CD4-positive, alpha-beta memory T cell (primary cell): ENCODE measurements at regions of chr3 and their contacts with region 1.

Region 1: GRCh38 chr3:156151824-156152428 is 31.5 kb downstream of the KCNAB1 start:
- DNase-seq: peak; percentile 40 to 56 (median 45)
- H3K4me3 ChIP-seq: no peak overlapping the region
- H3K4me3 Mint-ChIP-seq: no peak overlapping the region
- H3K27ac ChIP-seq: no peak overlapping the region
- H3K27ac Mint-ChIP-seq: peak overlapping the region in 2 of 7 donors; percentile 31 to 63
- H3K4me1 ChIP-seq: no peaks in the 10 kb centered on the region
- H3K4me1 Mint-ChIP-seq: peaks cover 0 to 1% (median under 1%) of the 10 kb centered on the region in 4 donors
- H3K27me3 ChIP-seq: no peaks in the 10 kb centered on the region
- H3K27me3 Mint-ChIP-seq: peaks cover 0 to 1% of the 10 kb centered on the region in 2 donors

Region 2: GRCh38 chr3:155870133-155870944 is 281.6 kb before region 1 on chr3 and contains the start of gene GMPS:
- CTCF ChIA-PET with region 1: no interaction called
- POLR2A ChIA-PET with region 1: no interaction called
- intact Hi-C with region 1: no loop called
- DNase-seq: peak; percentile 93 to 98 (median 96)
- H3K4me3 ChIP-seq: peak within 1 kb of the TSS; percentile 74 to 96
- H3K4me3 Mint-ChIP-seq: peak within 1 kb of the TSS; percentile 93 to 100 (median 97)
- H3K27ac ChIP-seq: peak within 1 kb of the TSS; percentile 83
- H3K27ac Mint-ChIP-seq: peak within 1 kb of the TSS; percentile 95 to 99 (median 98)
- H3K4me1 ChIP-seq: peaks cover 36% of the 10 kb centered on the region
- H3K4me1 Mint-ChIP-seq: peaks cover 11 to 44% (median 25%) of the 10 kb centered on the region in 4 donors
- H3K27me3 ChIP-seq: no peaks in the 10 kb centered on the region
- H3K27me3 Mint-ChIP-seq: no peaks in the 10 kb centered on the region
- total RNA-seq, gene GMPS: 50.5 to 53.2 TPM

Region 3: DNA sequence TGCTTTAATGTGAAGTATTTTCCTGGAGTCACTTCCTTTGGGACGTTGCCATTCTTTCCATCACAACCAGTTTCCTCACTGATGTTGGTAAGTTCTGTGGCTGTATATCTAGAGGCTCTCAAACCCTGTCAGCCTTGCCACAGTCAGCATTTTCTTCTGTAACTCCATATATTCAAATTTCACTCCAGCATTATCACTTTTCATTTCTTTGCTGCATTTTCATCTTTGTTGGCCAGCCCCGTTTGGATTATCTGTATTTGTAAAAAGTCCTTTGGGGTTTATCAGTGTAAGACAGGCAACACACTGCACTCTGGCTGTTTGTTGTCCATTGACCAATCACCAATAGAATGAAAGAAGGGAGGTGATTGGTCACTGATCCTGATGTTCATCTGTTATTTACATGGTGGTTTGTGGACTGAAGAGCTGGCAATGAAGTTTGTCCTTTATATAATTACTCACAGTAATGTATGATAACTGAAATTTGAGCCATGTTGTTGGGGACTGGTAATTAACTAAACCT is 261.2 kb before region 1 on chr3:
- CTCF ChIA-PET with region 1: no interaction called
- POLR2A ChIA-PET with region 1: no interaction called
- intact Hi-C with region 1: no loop called
- DNase-seq: no peak
- H3K4me3 ChIP-seq: no peak overlapping the region
- H3K4me3 Mint-ChIP-seq: no peak overlapping the region
- H3K27ac ChIP-seq: no peak overlapping the region
- H3K27ac Mint-ChIP-seq: no peak overlapping the region
- H3K4me1 ChIP-seq: peaks cover 21% of the 10 kb centered on the region
- H3K4me1 Mint-ChIP-seq: peaks cover 27 to 41% (median 35%) of the 10 kb centered on the region in 4 donors
- H3K27me3 ChIP-seq: no peaks in the 10 kb centered on the region
- H3K27me3 Mint-ChIP-seq: no peaks in the 10 kb centered on the region

Region 4: GRCh38 chr3:156382458-156383346 is 230.8 kb after region 1 on chr3:
- CTCF ChIA-PET with region 1: interaction called, 22 read pairs
- POLR2A ChIA-PET with region 1: no interaction called
- intact Hi-C with region 1: no loop called
- DNase-seq: no peak
- H3K4me3 ChIP-seq: no peak overlapping the region
- H3K4me3 Mint-ChIP-seq: no peak overlapping the region
- H3K27ac ChIP-seq: no peak overlapping the region
- H3K27ac Mint-ChIP-seq: no peak overlapping the region
- H3K4me1 ChIP-seq: no peaks in the 10 kb centered on the region
- H3K4me1 Mint-ChIP-seq: no peaks in the 10 kb centered on the region
- H3K27me3 ChIP-seq: no peaks in the 10 kb centered on the region
- H3K27me3 Mint-ChIP-seq: peaks cover 6 to 7% of the 10 kb centered on the region in 2 donors

Region 5: DNA sequence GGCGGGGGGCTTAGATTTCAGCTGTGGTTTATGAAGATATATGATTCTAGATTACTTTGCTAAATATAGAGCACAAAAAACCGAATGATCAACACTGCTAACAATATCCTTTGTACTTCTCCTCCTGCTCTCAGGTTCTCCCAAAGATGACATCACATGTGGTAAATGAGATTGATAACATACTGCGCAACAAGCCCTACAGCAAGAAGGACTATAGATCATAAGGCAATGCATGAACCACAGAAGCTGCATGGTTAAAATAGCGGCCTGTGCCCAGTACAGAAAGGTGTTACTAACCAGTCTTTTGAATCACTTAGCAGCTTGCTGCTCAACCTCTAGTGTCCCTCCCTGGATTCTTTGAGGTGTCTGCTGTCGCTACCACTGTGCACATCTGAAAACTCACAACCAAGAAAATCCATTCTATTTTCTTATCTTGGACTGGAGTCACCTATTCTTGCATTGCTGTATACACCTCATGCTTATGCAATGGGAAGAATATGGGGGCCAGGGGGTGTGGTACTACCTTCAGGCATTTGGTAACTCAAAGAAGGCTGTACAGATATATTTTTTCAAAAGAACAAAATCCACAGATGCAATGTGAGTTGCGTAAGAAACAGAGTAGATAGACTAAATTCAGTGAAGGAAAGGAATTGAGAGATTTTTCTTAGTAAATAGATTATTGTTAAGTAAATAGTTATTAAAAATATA is 384.8 kb after region 1 on chr3:
- CTCF ChIA-PET with region 1: interaction called, 78 read pairs
- POLR2A ChIA-PET with region 1: no interaction called
- intact Hi-C with region 1: loop called (anchors 1 kb)
- DNase-seq: no peak
- H3K4me3 ChIP-seq: no peak overlapping the region
- H3K4me3 Mint-ChIP-seq: no peak overlapping the region
- H3K27ac ChIP-seq: no peak overlapping the region
- H3K27ac Mint-ChIP-seq: no peak overlapping the region
- H3K4me1 ChIP-seq: no peaks in the 10 kb centered on the region
- H3K4me1 Mint-ChIP-seq: peaks cover 0 to 2% (median 0%) of the 10 kb centered on the region in 4 donors
- H3K27me3 ChIP-seq: no peaks in the 10 kb centered on the region
- H3K27me3 Mint-ChIP-seq: no peaks in the 10 kb centered on the region

Region 6: DNA sequence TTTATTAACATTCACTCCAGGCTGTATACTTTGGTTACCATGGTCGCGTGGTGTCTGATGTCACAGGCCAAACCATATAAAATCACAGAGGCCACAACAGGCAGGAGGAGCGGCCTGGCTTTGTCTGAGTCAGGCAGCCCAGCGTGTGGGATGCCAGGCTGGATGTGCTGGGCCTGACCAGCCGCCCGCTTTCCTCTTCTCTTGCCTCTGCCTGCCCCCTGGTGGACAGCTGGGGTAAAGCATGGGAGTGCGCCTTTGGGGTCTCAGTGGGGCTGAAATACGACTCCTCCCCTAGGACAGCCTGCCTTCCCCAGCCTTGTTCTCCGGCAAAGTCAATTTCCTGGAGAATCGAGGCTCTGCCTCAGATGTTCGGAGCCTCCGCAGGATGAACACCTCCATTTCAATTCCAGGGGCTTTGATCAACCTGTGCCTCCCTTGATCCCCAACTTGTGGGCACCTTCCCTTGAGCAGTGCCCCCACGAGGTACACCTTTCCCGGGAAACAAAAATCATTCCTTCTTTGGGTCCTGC is 929.8 kb after region 1 on chr3:
- CTCF ChIA-PET with region 1: interaction called, 36 read pairs
- POLR2A ChIA-PET with region 1: no interaction called
- intact Hi-C with region 1: loop called (anchors 1 kb)
- DNase-seq: peak; percentile 82 to 92 (median 83)
- H3K4me3 ChIP-seq: no peak overlapping the region
- H3K4me3 Mint-ChIP-seq: peak overlapping the region in 5 of 8 donors; percentile 11 to 39 (median 21)
- H3K27ac ChIP-seq: peak overlapping the region; percentile 55
- H3K27ac Mint-ChIP-seq: peak overlapping the region; percentile 85 to 96 (median 89)
- H3K4me1 ChIP-seq: peaks cover 20% of the 10 kb centered on the region
- H3K4me1 Mint-ChIP-seq: peaks cover 10 to 29% (median 17%) of the 10 kb centered on the region in 4 donors
- H3K27me3 ChIP-seq: no peaks in the 10 kb centered on the region
- H3K27me3 Mint-ChIP-seq: no peaks in the 10 kb centered on the region

Region 7: DNA sequence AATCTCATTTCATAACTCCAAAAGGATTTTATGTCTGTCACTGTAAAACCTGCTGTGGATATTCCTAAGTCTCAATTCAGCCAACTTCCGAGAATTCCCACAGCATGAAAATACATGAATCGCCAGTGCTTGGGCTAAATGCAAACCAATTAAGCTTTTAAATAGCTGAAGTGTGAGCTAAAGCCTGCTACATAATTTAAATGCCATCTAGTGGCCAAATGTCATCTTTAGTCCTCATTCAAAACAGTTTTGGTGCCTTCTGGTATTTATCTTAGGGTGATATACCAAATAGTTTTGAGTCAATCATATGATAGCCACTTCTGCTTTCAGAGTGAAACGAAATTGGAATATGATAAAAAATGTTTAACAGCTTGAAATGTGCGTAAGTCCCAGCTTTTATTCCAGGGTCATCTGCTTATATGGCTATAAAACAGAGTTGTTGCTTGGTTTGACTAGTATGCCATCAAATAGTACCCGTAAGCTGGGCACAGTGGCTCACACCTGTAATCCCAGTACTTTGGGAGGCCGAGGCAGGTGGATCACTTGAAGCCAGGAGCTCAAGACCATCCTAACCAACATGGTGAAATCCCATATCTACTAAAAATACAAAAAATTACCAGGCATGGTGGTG is 1049.8 kb after region 1 on chr3:
- CTCF ChIA-PET with region 1: interaction called, 21 read pairs
- POLR2A ChIA-PET with region 1: no interaction called
- intact Hi-C with region 1: loop called (anchors 1 kb)
- DNase-seq: peak in 3 of 5 donors; percentile 11 to 26 (median 23)
- H3K4me3 ChIP-seq: no peak overlapping the region
- H3K4me3 Mint-ChIP-seq: no peak overlapping the region
- H3K27ac ChIP-seq: no peak overlapping the region
- H3K27ac Mint-ChIP-seq: no peak overlapping the region
- H3K4me1 ChIP-seq: no peaks in the 10 kb centered on the region
- H3K4me1 Mint-ChIP-seq: no peaks in the 10 kb centered on the region
- H3K27me3 ChIP-seq: no peaks in the 10 kb centered on the region
- H3K27me3 Mint-ChIP-seq: no peaks in the 10 kb centered on the region